SK-MEL-5 (cell line): ENCODE measurements at regions of chr15 and their contacts with region 1.

Region 1: DNA sequence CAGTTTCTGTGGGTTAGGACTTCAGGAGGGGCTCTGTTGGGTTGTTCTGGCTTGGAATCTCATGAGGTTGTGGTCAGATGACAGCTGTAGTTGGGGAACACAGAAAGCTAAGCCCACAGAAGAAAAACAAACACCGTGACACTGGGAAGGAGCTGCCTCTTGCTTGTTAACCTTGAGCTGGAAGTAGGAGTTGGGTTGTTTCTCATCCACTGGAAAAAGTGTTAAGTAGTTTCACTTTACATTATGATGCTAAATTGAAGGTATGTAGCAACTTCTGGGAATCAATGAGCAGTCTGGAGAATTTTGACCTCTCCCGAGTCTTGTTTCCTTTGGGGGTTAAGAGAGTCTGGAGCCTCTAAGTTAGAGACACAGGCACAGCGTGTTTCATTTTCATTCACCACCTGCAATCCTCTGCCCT is 20.4 kb downstream of the HACD3 start:
- DNase-seq: peak; percentile 56

Region 2: DNA sequence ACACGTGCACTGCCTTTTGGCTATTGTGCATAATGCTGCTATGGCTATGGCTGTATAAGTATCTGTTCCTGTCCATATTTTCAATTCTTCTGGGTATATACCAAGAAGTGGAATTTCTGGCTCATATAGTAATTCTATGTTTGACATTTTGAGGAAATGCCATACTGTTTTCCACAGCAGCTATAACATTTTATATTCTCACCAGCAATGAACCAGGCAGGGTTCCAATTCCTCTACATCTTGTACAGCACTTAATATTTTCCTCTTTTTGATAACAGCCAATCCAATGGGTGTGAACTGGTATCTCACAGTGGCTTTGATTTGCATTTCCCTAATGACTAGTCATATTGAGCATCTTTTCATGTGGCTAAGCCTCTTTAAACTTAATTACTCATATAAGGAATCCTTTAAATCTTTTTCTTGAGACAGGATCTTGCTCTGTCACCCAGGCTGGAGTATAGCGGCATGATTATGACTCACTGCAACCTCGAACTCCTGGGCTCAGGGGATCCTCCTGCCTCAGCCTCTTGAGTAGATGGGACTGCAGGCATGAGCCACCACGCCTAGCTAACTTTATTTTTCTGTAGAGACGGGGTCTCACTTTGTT is 89.8 kb before region 1 on chr15:
- in situ Hi-C with region 1: loop called (anchors 25 kb)
- DNase-seq: no peak

Region 3: GRCh38 chr15:65512189-65512588 is 38.5 kb before region 1 on chr15:
- in situ Hi-C with region 1: no loop called
- DNase-seq: no peak

Region 4: DNA sequence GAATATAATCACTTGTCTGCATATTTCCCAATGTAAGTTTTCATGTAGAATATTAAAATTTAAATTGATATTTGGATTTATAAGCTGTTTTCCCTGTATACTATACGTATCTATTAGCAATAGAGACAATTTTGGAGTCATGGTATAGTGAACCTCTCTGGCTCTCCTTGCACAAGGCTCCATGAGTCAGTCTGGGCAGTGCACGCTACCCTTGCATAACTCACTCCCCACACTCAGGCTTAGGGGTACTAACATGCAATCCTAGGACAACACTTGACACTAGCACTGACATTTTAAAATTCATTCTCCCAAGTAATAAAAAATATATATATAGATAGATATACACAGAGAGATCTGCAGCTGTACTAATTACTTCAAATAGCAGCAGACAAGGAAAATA is 110.2 kb after region 1 on chr15:
- in situ Hi-C with region 1: no loop called
- DNase-seq: no peak